Activated CD4-positive, alpha-beta T cell treated with anti-CD3 and anti-CD28 coated beads for 36 hours (primary cell): ENCODE measurements at regions of chr2 and their contacts with region 1.

Region 1: GRCh38 chr2:15625344-15626036 is 33.8 kb downstream of the DDX1 start:
- DNase-seq: no peak
- ATAC-seq: no peak
- H3K4me3 Mint-ChIP-seq: no peak overlapping the region
- H3K27ac Mint-ChIP-seq: peak overlapping the region; percentile 58
- H3K4me1 Mint-ChIP-seq: no peaks in the 10 kb centered on the region
- H3K27me3 Mint-ChIP-seq: no peaks in the 10 kb centered on the region

Region 2: GRCh38 chr2:14790041-14790640 is 835.3 kb before region 1 on chr2:
- CTCF ChIA-PET with region 1: no interaction called
- POLR2A ChIA-PET with region 1: no interaction called
- intact Hi-C with region 1: no loop called
- DNase-seq: no peak
- ATAC-seq: no peak
- H3K4me3 Mint-ChIP-seq: no peak overlapping the region
- H3K27ac Mint-ChIP-seq: no peak overlapping the region
- H3K4me1 Mint-ChIP-seq: no peaks in the 10 kb centered on the region
- H3K27me3 Mint-ChIP-seq: no peaks in the 10 kb centered on the region

Region 3: DNA sequence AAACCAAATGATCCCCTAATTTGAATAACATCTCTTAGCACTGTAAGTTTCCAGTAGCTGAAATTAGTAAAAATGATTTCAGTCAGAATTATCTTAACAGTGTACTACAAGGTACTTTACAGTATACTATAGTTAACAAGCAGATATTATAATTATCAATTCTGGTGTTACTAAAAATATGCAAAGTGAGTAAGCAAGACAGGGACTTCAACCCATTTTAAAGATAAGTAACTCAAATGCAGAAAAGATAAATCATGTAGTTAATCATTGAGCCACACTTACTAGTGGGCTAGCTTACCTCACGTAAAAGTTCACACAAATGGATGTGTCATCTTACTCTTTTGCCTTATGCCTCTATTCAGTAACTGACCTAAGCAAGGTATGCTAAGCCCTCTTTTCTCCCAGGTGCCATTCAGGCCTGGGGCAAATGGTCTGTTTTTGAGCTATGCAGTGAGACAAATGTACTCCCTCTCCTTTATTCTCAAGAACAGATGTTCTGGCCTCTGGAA is 165.3 kb before region 1 on chr2:
- CTCF ChIA-PET with region 1: no interaction called
- POLR2A ChIA-PET with region 1: no interaction called
- intact Hi-C with region 1: no loop called
- DNase-seq: no peak
- ATAC-seq: no peak
- H3K4me3 Mint-ChIP-seq: no peak overlapping the region
- H3K27ac Mint-ChIP-seq: no peak overlapping the region
- H3K4me1 Mint-ChIP-seq: no peaks in the 10 kb centered on the region
- H3K27me3 Mint-ChIP-seq: no peaks in the 10 kb centered on the region

Region 4: DNA sequence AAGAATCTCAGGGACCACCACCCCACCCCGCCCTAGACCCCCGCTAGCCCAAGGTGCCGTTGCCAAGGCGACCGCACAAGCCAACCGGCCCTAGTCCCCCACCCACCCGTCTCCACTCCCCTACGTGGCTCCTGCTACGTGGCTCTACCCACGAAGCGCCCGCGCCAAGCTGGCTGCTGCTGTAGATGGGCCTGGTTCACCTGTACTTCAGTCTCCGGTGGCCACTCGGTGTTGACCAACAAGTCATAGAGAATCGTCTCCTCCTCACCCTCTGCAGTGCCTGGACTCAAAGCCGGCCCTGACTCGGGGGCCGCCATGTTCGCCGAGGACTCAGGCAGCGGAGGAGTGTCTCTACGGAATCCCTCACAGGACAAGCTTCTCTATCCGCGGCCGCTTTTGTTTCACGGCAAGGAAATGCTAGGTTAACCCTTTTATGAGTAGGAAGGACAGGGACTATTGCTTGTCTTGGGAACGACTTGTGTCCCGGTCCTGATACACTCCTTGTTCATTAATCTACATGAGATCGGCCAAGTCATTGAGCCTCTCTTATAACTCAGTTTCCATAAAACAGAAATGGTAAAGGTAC is 64.4 kb before region 1 on chr2 and contains the start of gene NBAS:
- CTCF ChIA-PET with region 1: no interaction called
- POLR2A ChIA-PET with region 1: no interaction called
- intact Hi-C with region 1: no loop called
- DNase-seq: peak; percentile 90
- ATAC-seq: peak; percentile 80
- H3K4me3 Mint-ChIP-seq: peak within 1 kb of the TSS; percentile 96
- H3K27ac Mint-ChIP-seq: peak within 1 kb of the TSS; percentile 97
- H3K4me1 Mint-ChIP-seq: peaks cover 34% of the 10 kb centered on the region
- H3K27me3 Mint-ChIP-seq: peaks cover 2% of the 10 kb centered on the region
- total RNA-seq, gene NBAS: 38.1 to 44.3 TPM

Region 5: DNA sequence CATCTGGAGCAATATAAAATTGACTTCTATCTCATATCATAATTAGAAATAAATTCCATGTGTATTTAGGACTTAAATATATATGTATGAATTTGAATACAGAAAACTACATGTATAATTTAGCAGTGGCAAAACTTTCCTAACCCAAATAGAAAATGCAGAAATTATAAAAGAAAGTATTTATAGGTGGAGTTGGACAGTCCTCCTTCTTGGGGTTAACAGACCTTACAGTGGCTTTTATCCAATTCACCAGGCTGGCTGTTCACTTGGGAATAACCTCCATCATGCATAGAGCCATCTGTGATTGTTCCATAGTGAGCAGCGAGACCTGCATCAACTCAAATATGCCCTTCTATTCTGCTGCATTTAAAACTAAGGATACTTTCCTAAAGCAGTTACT is 25.5 kb before region 1 on chr2:
- CTCF ChIA-PET with region 1: no interaction called
- POLR2A ChIA-PET with region 1: no interaction called
- intact Hi-C with region 1: loop called in 1 of 2 experiments (anchors 2 kb)
- DNase-seq: no peak
- ATAC-seq: no peak
- H3K4me3 Mint-ChIP-seq: no peak overlapping the region
- H3K27ac Mint-ChIP-seq: peak overlapping the region; percentile 7
- H3K4me1 Mint-ChIP-seq: peaks cover 8% of the 10 kb centered on the region
- H3K27me3 Mint-ChIP-seq: no peaks in the 10 kb centered on the region